ENCODE measurements at regions of chr22 and their contacts with region 1.

Region 1: DNA sequence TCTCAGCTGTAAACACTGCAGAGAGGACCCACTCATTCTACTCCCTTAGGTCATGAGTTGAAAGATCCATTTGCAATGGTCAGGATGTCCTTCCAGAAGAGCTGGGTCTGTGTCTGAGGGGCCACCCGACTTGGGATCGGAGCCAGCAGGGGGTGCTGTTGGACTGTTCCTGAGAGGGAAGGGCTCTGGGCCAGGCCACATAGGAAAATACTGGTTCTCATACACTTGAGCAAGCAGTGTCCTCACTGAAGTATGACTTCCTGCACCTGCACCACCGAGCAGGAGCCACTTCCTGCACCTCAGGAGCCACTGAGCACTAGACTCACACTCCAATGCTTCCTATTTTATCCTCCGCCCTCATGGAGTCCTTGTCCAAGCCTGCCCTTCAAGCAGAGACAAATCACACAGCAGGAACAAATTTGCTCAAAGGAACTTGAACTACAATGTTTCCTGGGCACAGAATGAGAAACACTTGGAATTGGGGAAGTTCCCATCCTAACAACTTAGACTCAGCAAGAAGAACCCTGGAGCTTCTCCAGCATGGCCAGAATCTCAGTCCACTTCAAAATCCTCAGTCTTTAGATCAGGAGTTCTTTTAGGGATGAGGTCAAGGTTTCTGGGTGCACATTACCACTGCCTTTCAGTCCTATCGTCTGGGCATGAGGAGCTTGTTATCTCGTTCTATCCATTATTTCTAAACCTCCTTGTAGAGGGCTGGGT is 36.6 kb upstream of the VPREB1 start:
- DNase-seq: peak; percentile 92
- H3K4me3 Mint-ChIP-seq: no peak overlapping the region
- H3K27ac Mint-ChIP-seq: peak overlapping the region; percentile 9
- H3K4me1 Mint-ChIP-seq: peaks cover 37% of the 10 kb centered on the region
- H3K27me3 Mint-ChIP-seq: peaks cover 3% of the 10 kb centered on the region

Region 2: DNA sequence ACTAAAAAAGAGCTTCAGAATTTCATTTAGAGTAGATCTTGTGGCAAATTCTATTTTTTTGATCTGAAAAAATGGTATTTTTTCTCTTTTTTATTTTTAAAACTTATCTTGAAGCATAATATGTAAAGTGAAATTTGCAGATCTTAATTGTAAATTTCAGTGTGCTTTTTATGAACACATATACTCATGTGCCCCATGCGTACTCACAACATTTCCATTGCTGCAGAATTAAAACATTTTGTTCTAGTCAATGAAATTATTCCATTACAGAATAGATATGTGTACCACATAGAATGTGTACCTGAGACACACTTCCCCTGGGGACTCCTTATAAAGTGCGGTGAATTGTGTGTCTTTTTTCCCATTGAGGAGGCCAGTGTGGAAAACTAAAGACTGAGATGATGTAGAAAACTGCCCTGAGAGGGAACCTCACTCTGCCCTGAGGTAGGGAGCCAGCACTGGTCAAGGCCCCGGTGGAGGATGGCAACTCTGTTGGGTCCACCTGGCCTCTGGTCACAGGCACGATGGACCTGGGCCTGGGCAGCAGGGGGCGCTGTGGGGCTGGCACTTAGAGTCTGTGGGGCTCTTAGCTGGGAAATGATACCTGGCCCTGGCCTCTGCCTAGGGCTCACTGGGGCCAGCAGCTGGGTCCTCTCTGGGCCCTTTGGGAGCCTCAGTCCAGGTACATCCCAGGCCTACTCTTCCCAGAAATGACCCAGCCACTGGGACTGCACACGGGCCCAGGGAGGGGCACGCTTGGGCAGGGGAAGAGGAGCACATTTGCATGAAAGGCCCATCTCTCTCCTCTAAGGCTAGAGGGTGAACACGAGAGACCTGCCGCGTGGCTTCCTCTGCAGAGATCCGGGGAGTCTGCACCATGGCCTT is 147.6 kb before region 1 on chr22:
- CTCF ChIA-PET with region 1: no interaction called
- intact Hi-C with region 1: loop called (anchors 5 kb)
- DNase-seq: peak; percentile 82
- H3K4me3 Mint-ChIP-seq: no peak overlapping the region
- H3K27ac Mint-ChIP-seq: no peak overlapping the region
- H3K4me1 Mint-ChIP-seq: no peaks in the 10 kb centered on the region
- H3K27me3 Mint-ChIP-seq: peaks cover 21% of the 10 kb centered on the region

Region 3: GRCh38 chr22:22168190-22168940 is 39.6 kb before region 1 on chr22:
- CTCF ChIA-PET with region 1: no interaction called
- intact Hi-C with region 1: no loop called
- DNase-seq: no peak
- H3K4me3 Mint-ChIP-seq: peak overlapping the region; percentile 24
- H3K27ac Mint-ChIP-seq: no peak overlapping the region
- H3K4me1 Mint-ChIP-seq: peaks cover 17% of the 10 kb centered on the region
- H3K27me3 Mint-ChIP-seq: no peaks in the 10 kb centered on the region

Region 4: DNA sequence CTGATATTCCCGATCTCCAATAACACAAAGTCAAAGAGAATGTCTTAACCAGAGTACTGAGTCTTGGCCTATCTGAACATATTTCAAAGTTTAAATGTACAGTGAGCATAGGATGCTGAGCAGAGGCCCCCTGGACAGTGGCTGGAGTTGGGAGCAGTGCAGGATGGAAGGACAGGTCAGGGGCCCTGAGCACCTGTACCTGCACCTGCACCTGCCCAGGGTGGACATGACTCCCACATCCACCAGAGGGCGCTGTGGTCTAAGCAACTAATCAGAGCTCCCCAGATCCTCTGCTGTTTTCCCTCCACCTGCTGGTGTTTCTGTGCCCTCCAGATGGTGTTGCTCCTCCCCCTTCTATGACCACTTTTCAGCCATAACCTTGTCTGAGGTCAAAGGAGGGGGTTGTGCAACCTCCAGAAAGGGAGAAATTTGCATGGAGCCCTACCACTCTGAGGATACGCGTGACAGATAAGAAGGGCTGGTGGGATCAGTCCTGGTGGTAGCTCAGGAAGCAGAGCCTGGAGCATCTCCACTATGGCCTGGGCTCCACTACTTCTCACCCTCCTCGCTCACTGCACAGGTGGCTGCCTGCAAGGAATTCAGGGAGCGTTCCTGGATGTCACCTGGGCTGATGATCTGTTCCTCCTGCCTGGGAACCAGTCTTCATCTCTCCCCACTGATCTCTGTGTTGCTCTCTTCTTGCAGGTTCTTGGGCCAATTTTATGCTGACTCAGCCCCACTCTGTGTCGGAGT is 12.6 kb before region 1 on chr22:
- CTCF ChIA-PET with region 1: interaction called, 46 read pairs
- intact Hi-C with region 1: no loop called
- DNase-seq: peak; percentile 92
- H3K4me3 Mint-ChIP-seq: no peak overlapping the region
- H3K27ac Mint-ChIP-seq: no peak overlapping the region
- H3K4me1 Mint-ChIP-seq: no peaks in the 10 kb centered on the region
- H3K27me3 Mint-ChIP-seq: peaks cover 3% of the 10 kb centered on the region

Region 5: GRCh38 chr22:22248878-22249277 is 40.9 kb after region 1 on chr22:
- CTCF ChIA-PET with region 1: interaction called, 16 read pairs
- intact Hi-C with region 1: no loop called
- DNase-seq: peak; percentile 16
- H3K4me3 Mint-ChIP-seq: no peak overlapping the region
- H3K27ac Mint-ChIP-seq: no peak overlapping the region
- H3K4me1 Mint-ChIP-seq: peaks cover 12% of the 10 kb centered on the region
- H3K27me3 Mint-ChIP-seq: peaks cover 7% of the 10 kb centered on the region

Region 6: DNA sequence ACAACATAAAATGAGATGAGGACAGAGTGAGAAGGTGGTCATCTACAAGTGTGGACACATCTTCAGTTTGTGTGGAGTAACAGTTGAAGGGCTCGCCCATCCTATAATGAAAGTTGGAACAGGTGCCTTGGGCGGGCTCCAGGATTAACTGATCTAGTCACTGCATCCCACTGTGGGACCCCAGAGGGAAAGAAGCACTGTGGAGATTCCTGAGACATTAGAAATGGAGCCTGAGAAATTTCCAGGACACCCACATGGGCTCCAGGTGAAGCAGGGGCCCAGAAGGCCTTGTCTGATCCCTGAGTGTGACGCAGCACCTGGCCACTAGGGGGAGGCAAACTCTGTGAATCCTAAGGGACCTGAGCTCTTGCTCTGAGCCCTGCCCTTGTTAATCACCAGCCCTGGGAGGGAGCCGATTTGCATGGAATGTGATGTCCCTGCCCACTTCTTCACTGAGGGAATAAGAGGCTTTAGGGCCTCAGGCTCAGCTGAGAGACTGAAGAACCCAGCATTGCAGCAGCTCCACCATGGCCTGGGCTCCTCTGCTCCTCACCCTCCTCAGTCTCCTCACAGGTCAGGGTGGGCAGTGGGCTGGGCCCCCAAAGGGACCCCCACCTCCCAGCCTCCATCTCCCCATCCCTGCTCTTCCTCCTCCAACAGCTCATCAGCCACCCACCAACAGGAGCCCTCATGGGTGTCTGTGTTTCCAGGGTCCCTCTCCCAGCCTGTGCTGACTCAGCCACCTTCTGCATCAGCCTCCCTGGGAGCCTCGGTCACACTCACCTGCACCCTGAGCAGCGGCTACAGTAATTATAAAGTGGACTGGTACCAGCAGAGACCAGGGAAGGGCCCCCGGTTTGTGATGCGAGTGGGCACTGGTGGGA is 134.9 kb after region 1 on chr22:
- CTCF ChIA-PET with region 1: interaction called, 5 read pairs
- intact Hi-C with region 1: loop called (anchors 5 kb)
- DNase-seq: peak; percentile 82
- H3K4me3 Mint-ChIP-seq: no peak overlapping the region
- H3K27ac Mint-ChIP-seq: no peak overlapping the region
- H3K4me1 Mint-ChIP-seq: no peaks in the 10 kb centered on the region
- H3K27me3 Mint-ChIP-seq: no peaks in the 10 kb centered on the region

Region 7: DNA sequence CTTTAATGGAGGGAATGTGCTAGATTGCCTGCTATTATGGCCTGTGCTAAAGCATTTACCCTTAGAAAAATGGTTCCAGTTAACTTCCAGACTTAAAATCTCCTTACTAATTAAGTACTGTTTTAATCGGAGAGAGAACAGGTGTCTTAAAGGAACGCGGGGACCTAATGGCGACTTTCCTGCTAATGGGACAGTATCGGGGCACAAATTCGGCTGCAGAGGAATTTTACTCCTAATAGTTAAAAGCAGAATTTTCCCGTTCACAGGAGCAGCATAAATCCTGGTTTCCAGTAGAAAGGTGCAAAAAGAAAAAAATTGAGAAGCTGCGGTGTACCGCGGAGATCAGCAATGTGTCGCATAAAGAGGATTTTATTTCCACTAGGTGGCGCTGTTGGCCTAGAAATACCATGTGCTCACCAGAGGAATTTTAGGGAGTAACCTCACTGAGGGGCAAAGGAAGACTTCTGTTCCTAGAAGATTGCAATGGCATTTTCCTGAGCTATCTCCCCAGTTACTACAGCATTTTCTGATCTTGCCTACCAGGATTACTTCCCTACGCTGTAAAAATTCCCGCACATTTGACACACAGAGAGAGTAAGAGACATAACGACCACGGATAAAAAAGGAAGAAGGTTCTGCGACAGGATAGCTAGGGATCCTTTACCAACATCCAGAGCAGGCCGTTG is 256.0 kb after region 1 on chr22:
- CTCF ChIA-PET with region 1: no interaction called
- intact Hi-C with region 1: loop called (anchors 5 kb)
- DNase-seq: peak; percentile 75
- H3K4me3 Mint-ChIP-seq: no peak overlapping the region
- H3K27ac Mint-ChIP-seq: no peak overlapping the region
- H3K4me1 Mint-ChIP-seq: no peaks in the 10 kb centered on the region
- H3K27me3 Mint-ChIP-seq: peaks cover 27% of the 10 kb centered on the region